ENCODE measurements at regions of chr16 and their contacts with region 1.

Region 1: GRCh38 chr16:9047686-9048301 is 43.6 kb upstream of the HAPSTR1 start:
- DNase-seq: peak; percentile 94 to 96
- ATAC-seq: peak; percentile 98
- H3K4me3 ChIP-seq: no peak overlapping the region
- H3K27ac ChIP-seq: peak overlapping the region; percentile 79 to 87
- H3K4me1 ChIP-seq: no peaks in the 10 kb centered on the region
- H3K27me3 ChIP-seq: no peaks in the 10 kb centered on the region

Region 2: GRCh38 chr16:8998114-8998513 is 49.7 kb before region 1 on chr16:
- intact Hi-C with region 1: no loop called
- DNase-seq: no peak
- ATAC-seq: no peak
- H3K4me3 ChIP-seq: no peak overlapping the region
- H3K27ac ChIP-seq: no peak overlapping the region
- H3K4me1 ChIP-seq: no peaks in the 10 kb centered on the region
- H3K27me3 ChIP-seq: no peaks in the 10 kb centered on the region

Region 3: GRCh38 chr16:9090960-9091866 is 43.4 kb after region 1 on chr16 and contains the start of gene HAPSTR1:
- intact Hi-C with region 1: loop called in 1 of 2 experiments (anchors 5 kb)
- DNase-seq: peak; percentile 100
- ATAC-seq: peak; percentile 97
- H3K4me3 ChIP-seq: peak within 1 kb of the TSS; percentile 94 to 99
- H3K27ac ChIP-seq: peak within 1 kb of the TSS; percentile 97 to 98
- H3K4me1 ChIP-seq: peaks cover 0 to 2% of the 10 kb centered on the region in 2 donors
- H3K27me3 ChIP-seq: peaks cover 0 to 2% of the 10 kb centered on the region in 2 donors
- total RNA-seq, gene HAPSTR1: 65.4 to 67.5 TPM

Measured in aorta (tissue), 5 donors.